Heart left ventricle (tissue), 16 donors: ENCODE measurements at regions of chr11 and their contacts with region 1.

Region 1: GRCh38 chr11:128559496-128560103 is 27.8 kb downstream of the ETS1 start:
- DNase-seq: no peak
- ATAC-seq: no peak
- H3K4me3 ChIP-seq: no peak overlapping the region
- H3K27ac ChIP-seq: no peak overlapping the region
- H3K4me1 ChIP-seq: peaks cover 0 to 31% (median 14%) of the 10 kb centered on the region in 12 donors
- H3K27me3 ChIP-seq: no peaks in the 10 kb centered on the region
- CTCF ChIP-seq: no peak
- POLR2A ChIP-seq: no peak

Region 2: DNA sequence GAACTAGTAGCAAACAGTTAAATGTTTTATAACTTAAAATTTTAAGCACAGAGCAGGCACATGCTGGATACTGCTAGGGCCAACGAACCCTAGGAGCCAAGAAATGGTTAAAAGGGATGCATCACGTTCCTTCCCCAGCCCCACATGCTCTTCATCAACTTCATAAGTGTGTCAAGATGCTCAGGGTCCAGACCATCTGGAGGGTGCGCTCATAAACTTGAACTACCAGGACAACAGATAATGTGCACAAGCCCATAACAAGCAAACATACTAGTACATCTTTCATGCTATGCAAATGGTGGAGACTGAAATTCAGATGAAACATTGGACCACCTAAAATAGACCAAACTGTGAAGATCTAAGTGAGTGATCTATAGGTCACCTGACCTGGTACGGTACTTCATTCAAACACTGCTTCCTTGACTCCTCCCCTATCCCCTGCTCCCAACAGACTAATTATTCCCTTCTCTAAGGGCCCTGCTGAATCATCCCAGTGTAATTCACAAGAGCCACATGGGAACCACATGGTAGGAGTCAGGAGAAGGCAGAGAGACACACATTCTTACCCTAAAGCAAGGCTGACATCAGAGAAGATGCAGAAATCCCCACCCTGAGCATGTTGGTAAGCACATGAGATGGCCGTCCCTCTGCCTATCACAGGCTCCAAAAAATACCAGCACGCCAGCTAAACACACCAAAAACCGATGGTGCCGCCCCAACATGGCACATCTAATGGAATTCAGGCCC is 56.2 kb before region 1 on chr11:
- intact Hi-C with region 1: no loop called
- DNase-seq: no peak
- ATAC-seq: no peak
- H3K4me3 ChIP-seq: peak overlapping the region in 1 of 12 donors; percentile 1
- H3K27ac ChIP-seq: peak overlapping the region; percentile 2 to 96 (median 80)
- H3K4me1 ChIP-seq: peaks cover 36 to 100% (median 100%) of the 10 kb centered on the region in 12 donors
- H3K27me3 ChIP-seq: no peaks in the 10 kb centered on the region
- CTCF ChIP-seq: no peak
- POLR2A ChIP-seq: no peak

Region 3: DNA sequence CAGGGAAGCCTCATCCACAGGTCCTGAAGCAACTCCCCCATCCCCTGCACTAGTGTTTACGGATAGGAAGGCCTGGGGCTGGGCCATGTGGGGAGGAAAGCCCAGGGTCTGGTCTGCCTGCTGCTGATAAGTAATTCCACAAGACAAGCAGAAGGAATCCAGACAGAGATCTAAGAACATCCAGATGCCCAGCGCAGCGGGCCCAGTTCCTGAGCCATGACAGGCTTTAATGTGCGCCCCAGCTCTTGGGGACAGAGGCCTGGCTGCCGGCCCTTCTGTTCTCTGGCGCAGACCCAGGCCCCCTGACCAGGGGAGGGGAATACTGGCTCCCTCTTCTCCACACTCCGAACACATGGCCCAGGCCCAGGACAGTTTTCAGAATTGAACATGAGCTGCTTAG is 56.6 kb after region 1 on chr11:
- intact Hi-C with region 1: loop called in 4 of 10 experiments (anchors 5 to 10 kb)
- DNase-seq: peak in 1 of 5 donors; percentile 38
- ATAC-seq: peak in 1 of 4 donors; percentile 23
- H3K4me3 ChIP-seq: no peak overlapping the region
- H3K27ac ChIP-seq: no peak overlapping the region
- H3K4me1 ChIP-seq: peaks cover 0 to 32% (median 13%) of the 10 kb centered on the region in 12 donors
- H3K27me3 ChIP-seq: no peaks in the 10 kb centered on the region
- CTCF ChIP-seq: no peak
- POLR2A ChIP-seq: no peak

Region 4: GRCh38 chr11:128624269-128625175 is 64.9 kb after region 1 on chr11:
- intact Hi-C with region 1: loop called in 6 of 10 experiments (anchors 2 to 10 kb)
- DNase-seq: no peak
- ATAC-seq: no peak
- H3K4me3 ChIP-seq: no peak overlapping the region
- H3K27ac ChIP-seq: peak overlapping the region in 1 of 12 donors; percentile 81
- H3K4me1 ChIP-seq: peaks cover 0 to 76% (median 14%) of the 10 kb centered on the region in 12 donors
- H3K27me3 ChIP-seq: no peaks in the 10 kb centered on the region
- CTCF ChIP-seq: no peak
- POLR2A ChIP-seq: no peak